BJ (cell line): ENCODE measurements at regions of chr18 and their contacts with region 1.

Region 1: DNA sequence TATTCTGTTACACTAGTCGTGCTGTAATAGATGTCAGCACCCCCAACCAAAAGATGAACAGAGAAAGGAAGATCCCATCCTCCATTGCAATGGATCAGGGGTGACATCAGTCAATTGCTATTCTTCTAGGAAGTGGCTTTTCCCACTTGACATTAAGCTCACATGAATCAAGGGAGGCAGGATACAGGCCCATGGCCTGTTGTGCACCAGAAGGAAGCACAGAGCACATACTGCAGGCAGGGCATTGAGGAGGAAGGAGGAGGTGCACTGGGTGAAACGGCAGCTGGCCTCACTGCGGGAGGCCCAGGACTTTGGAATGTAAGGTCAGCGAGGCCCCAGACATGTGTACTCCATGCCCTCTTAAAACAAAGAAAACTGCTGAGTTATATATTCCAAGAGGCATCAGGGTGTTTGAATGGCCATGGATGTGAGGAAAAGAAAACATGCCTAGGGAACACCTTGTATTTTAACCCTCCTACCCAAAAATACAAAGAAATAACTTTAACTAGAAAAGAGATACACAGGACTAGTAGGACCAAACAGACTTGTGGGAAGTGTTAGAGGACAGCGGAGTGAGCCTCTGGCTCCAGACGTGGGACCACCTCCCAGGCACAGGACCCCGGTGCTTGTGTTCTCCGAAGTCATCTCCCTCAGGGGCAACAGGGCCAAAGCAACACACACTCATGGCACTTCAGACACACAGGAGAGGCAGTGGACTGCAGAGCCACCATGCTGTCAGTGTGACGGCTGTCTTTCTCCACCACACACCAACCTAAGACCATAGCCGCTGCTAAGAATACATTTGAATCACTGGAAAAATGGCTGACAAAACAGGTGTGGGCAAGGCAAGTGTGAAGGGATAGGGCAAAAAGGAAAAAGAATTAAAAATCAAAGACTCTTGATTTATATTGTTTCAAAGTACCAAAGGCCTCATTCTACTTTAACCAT is 51.4 kb upstream of the RIOK3 start:
- DNase-seq: no peak
- H3K4me3 ChIP-seq: no peak overlapping the region
- H3K27me3 ChIP-seq: no peaks in the 10 kb centered on the region
- CTCF ChIP-seq: no peak

Region 2: GRCh38 chr18:23291456-23292205 is 110.0 kb before region 1 on chr18:
- CTCF ChIA-PET with region 1: no interaction called
- POLR2A ChIA-PET with region 1: no interaction called
- DNase-seq: peak; percentile 28
- H3K4me3 ChIP-seq: no peak overlapping the region
- H3K27me3 ChIP-seq: no peaks in the 10 kb centered on the region
- CTCF ChIP-seq: no peak

Region 3: DNA sequence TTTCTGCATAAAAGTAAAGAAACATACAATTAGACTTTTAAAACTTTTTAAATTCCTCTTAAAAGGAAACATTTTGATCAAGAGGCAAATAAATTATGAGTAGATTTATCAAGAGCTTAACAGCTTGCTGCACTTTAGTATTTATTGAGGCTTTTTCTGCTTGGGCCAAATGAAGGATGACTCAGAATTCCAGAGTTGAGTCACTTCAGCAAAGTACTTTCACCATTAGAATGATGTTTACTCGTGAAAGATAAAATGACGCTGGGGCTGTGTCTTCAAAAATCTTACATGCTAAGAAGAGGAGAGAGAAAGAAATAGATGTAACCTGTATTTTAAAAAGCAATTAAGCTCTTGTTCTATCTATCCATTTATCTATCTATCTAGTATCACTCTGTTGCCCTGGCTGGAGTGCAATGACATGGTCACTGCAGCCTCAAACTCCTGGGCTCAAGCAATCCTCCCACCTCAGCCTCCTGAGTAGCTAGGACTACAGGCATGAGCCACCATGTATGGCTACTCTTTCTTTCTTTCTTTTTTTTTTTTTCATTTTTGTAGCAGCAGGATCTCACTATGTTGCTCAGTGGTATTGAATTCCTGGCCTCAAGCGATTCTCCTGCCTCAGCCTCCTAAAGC is 23.9 kb before region 1 on chr18:
- CTCF ChIA-PET with region 1: interaction called, 15 read pairs
- POLR2A ChIA-PET with region 1: interaction called, 3 read pairs
- DNase-seq: peak; percentile 69
- H3K4me3 ChIP-seq: no peak overlapping the region
- H3K27me3 ChIP-seq: no peaks in the 10 kb centered on the region
- CTCF ChIP-seq: no peak

Region 4: DNA sequence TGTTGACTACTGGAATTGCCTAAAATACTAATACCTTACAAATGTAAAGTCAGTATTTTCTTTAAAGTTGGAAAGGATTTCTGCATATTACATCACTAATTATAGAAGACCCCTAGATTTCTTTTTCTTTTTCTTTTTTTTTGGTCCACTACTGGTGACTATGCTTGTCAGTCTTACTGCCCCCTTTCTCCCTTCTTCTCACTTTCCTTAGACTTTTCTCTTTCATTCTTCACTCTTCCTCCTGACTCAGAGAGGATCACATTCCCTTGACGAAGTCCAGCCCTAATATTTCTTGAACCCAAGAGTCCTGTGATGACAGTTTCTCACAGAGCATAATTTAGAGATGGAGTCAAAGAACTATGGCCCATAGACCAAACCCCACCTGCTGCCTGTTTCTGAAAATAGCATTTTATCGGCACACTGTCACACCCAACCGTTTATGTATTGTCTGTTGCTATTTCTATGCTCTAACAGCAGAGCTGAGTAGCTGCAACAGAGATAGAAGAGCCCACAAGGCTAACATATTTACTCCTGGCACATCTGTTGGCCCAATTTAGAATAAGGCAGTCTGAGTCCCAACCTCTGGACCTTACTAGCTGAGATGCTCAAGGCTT is 10.8 kb after region 1 on chr18:
- CTCF ChIA-PET with region 1: interaction called, 19 read pairs
- POLR2A ChIA-PET with region 1: no interaction called
- DNase-seq: no peak
- H3K4me3 ChIP-seq: no peak overlapping the region
- H3K27me3 ChIP-seq: no peaks in the 10 kb centered on the region
- CTCF ChIP-seq: no peak